ENCODE measurements at regions of chr2 and their contacts with region 1.

Region 1: GRCh38 chr2:74261204-74261864 is 62.9 kb downstream of the MTHFD2 start:
- DNase-seq: peak in 1 of 2 donors; percentile 62
- H3K4me3 ChIP-seq: no peak overlapping the region
- H3K27ac ChIP-seq: no peak overlapping the region
- H3K4me1 ChIP-seq: no peaks in the 10 kb centered on the region
- H3K27me3 ChIP-seq: no peaks in the 10 kb centered on the region
- CTCF ChIP-seq: peak; percentile 52 to 68

Region 2: GRCh38 chr2:74147727-74148456 is 113.4 kb before region 1 on chr2 and contains the start of gene BOLA3:
- intact Hi-C with region 1: loop called (anchors 10 kb)
- DNase-seq: peak; percentile 85 to 91
- H3K4me3 ChIP-seq: peak within 1 kb of the TSS; percentile 77 to 88
- H3K27ac ChIP-seq: peak within 1 kb of the TSS; percentile 72 to 75
- H3K4me1 ChIP-seq: peaks cover 0 to 26% (median 19%) of the 10 kb centered on the region in 4 donors
- H3K27me3 ChIP-seq: no peaks in the 10 kb centered on the region
- CTCF ChIP-seq: peak; percentile 44 to 64

Region 3: DNA sequence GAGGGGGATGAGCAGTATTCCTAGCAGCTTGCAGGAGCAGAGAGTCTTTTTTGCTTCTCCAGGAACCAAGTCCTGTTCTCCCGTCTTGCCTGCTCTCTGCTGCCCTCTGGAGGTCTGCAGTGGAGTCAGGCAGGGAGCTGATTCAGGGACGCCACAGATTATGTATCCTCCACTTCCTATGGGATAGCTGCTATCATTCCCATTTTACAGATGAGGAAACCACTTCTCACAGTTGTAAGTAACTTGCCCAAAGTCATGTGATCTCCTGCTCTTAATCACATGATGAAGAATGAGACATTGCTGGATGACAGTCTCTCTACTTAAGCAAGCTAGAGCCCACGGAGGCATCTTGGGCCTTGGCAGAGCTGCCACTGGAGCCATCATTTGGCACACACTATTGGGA is 73.6 kb after region 1 on chr2:
- intact Hi-C with region 1: loop called (anchors 5 kb)
- DNase-seq: peak; percentile 73 to 83
- H3K4me3 ChIP-seq: no peak overlapping the region
- H3K27ac ChIP-seq: no peak overlapping the region
- H3K4me1 ChIP-seq: no peaks in the 10 kb centered on the region
- H3K27me3 ChIP-seq: no peaks in the 10 kb centered on the region
- CTCF ChIP-seq: peak; percentile 81 to 96